ENCODE measurements at regions of chr5 and their contacts with region 1.

Region 1: DNA sequence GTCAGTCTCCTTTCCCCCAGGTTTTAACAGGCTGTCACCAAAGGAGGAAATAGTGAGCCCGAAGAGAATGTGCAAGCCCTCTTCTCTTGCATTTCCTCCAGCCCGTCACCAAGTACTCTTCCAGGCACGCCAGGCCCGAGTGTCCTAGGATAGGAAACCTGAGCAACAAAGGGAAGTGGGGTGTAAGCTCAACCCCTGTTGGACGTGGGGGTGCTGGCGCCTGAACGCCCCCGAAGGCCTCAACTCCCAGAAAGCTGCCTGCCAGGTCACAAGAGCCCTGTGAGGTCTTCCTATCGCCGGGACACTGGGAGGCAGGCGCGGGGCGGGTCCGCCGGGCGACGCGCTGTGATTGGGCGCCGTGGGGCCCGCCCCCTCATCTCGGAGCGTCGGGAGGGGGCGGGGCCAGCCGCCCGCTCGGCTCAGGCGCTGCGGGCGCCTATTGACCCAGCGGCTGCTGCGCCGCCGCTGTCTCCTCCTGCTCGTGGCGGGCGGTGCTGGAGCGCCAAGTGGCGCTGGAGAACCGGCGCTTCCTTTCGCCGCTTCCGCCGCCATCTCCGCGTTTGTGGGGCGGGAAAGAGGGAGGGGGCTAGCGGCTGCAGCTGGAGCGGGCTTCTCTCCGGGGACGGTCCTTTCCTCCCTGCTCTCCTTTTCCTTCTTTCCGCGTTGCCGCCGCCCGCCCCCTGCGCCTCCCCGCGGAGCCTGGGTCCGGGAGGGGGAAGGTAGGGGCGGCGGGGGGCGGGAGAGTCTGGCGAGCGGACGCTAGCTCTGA is 572 bp upstream of the MAN2A1 start:
- DNase-seq: peak; percentile 81 to 86
- H3K4me3 ChIP-seq: peak overlapping the region; percentile 91
- H3K27ac ChIP-seq: peak overlapping the region; percentile 66
- H3K4me1 ChIP-seq: peaks cover 18% of the 10 kb centered on the region
- H3K27me3 ChIP-seq: no peaks in the 10 kb centered on the region
- CTCF ChIP-seq: peak; percentile 29; the same call in 1 of the 2 replicates

Region 2: GRCh38 chr5:108521841-108522506 is 1167.2 kb before region 1 on chr5:
- CTCF ChIA-PET with region 1: no interaction called
- POLR2A ChIA-PET with region 1: no interaction called
- intact Hi-C with region 1: loop called (anchors 2 kb)
- DNase-seq: peak in 1 of 2 experiments; percentile 9
- H3K4me3 ChIP-seq: no peak overlapping the region
- H3K27ac ChIP-seq: no peak overlapping the region
- H3K4me1 ChIP-seq: no peaks in the 10 kb centered on the region
- H3K27me3 ChIP-seq: no peaks in the 10 kb centered on the region
- CTCF ChIP-seq: peak; percentile 77

Region 3: GRCh38 chr5:108727651-108728565 is 961.2 kb before region 1 on chr5:
- CTCF ChIA-PET with region 1: no interaction called
- POLR2A ChIA-PET with region 1: no interaction called
- intact Hi-C with region 1: loop called (anchors 2 kb)
- DNase-seq: peak; percentile 80 to 93
- H3K4me3 ChIP-seq: peak overlapping the region; percentile 73
- H3K27ac ChIP-seq: peak overlapping the region; percentile 78
- H3K4me1 ChIP-seq: peaks cover 37% of the 10 kb centered on the region
- H3K27me3 ChIP-seq: no peaks in the 10 kb centered on the region
- CTCF ChIP-seq: no peak

Region 4: GRCh38 chr5:109553846-109554245 is 135.3 kb before region 1 on chr5:
- CTCF ChIA-PET with region 1: no interaction called
- POLR2A ChIA-PET with region 1: no interaction called
- intact Hi-C with region 1: no loop called
- DNase-seq: no peak
- H3K4me3 ChIP-seq: no peak overlapping the region
- H3K27ac ChIP-seq: no peak overlapping the region
- H3K4me1 ChIP-seq: no peaks in the 10 kb centered on the region
- H3K27me3 ChIP-seq: no peaks in the 10 kb centered on the region
- CTCF ChIP-seq: no peak

Region 5: DNA sequence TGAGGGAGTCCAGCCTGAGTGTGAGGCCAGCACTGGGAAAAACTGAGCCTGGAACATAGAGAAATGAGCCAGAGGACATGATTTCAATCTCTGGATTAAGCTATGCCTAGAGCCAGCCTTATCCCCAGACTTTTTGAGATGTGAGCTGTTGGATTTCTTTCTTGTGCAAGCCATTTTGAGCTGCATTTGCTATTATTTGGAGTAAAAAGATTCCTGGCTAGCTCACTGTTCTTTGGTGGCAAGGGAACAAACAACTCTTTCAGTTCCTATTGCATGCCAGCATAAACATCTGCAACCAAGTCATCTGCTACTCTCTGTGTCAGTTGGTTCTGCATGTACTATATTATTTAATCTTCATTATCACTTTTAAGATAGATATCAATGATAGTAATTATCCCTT is 69.5 kb before region 1 on chr5:
- CTCF ChIA-PET with region 1: no interaction called
- POLR2A ChIA-PET with region 1: no interaction called
- intact Hi-C with region 1: no loop called
- DNase-seq: no peak
- H3K4me3 ChIP-seq: no peak overlapping the region
- H3K27ac ChIP-seq: no peak overlapping the region
- H3K4me1 ChIP-seq: no peaks in the 10 kb centered on the region
- H3K27me3 ChIP-seq: no peaks in the 10 kb centered on the region
- CTCF ChIP-seq: no peak

Region 6: DNA sequence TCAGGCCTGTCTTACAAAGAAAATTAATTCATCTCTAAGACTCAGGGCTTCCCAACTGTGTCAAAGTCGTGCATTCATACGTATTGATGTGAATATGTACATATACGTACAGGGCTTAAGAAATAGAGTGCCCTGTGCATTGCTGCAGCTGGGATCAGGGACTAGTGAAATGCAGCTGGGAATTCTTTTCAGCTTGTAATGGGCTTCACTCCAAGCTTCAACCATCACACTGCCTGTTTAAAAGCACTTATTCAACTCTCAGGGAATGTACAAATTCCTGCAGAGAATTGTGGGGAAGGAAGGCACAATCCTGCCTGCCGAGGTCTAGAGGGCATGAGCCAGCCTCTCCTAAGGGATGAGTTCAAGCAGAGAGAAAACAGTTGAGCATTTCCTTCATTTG is 59.1 kb before region 1 on chr5:
- CTCF ChIA-PET with region 1: no interaction called
- POLR2A ChIA-PET with region 1: no interaction called
- intact Hi-C with region 1: no loop called
- DNase-seq: no peak
- H3K4me3 ChIP-seq: no peak overlapping the region
- H3K27ac ChIP-seq: no peak overlapping the region
- H3K4me1 ChIP-seq: no peaks in the 10 kb centered on the region
- H3K27me3 ChIP-seq: peaks cover 10% of the 10 kb centered on the region; the same call in 1 of the 2 replicates
- CTCF ChIP-seq: no peak

Region 7: GRCh38 chr5:109788596-109788995 is 99.4 kb after region 1 on chr5:
- CTCF ChIA-PET with region 1: interaction called, 10 read pairs
- POLR2A ChIA-PET with region 1: no interaction called
- intact Hi-C with region 1: no loop called
- DNase-seq: no peak
- H3K4me3 ChIP-seq: no peak overlapping the region
- H3K27ac ChIP-seq: no peak overlapping the region
- H3K4me1 ChIP-seq: no peaks in the 10 kb centered on the region
- H3K27me3 ChIP-seq: no peaks in the 10 kb centered on the region
- CTCF ChIP-seq: no peak

Region 8: GRCh38 chr5:110045158-110045557 is 356.0 kb after region 1 on chr5:
- CTCF ChIA-PET with region 1: interaction called, 3 read pairs
- POLR2A ChIA-PET with region 1: no interaction called
- intact Hi-C with region 1: loop called (anchors 10 kb)
- DNase-seq: no peak
- H3K4me3 ChIP-seq: no peak overlapping the region
- H3K27ac ChIP-seq: no peak overlapping the region
- H3K4me1 ChIP-seq: no peaks in the 10 kb centered on the region
- H3K27me3 ChIP-seq: no peaks in the 10 kb centered on the region
- CTCF ChIP-seq: no peak

Measured in PC-9 (cell line).